Astrocyte of the cerebellum (primary cell): ENCODE measurements at regions of chr9 and their contacts with region 1.

Region 1: DNA sequence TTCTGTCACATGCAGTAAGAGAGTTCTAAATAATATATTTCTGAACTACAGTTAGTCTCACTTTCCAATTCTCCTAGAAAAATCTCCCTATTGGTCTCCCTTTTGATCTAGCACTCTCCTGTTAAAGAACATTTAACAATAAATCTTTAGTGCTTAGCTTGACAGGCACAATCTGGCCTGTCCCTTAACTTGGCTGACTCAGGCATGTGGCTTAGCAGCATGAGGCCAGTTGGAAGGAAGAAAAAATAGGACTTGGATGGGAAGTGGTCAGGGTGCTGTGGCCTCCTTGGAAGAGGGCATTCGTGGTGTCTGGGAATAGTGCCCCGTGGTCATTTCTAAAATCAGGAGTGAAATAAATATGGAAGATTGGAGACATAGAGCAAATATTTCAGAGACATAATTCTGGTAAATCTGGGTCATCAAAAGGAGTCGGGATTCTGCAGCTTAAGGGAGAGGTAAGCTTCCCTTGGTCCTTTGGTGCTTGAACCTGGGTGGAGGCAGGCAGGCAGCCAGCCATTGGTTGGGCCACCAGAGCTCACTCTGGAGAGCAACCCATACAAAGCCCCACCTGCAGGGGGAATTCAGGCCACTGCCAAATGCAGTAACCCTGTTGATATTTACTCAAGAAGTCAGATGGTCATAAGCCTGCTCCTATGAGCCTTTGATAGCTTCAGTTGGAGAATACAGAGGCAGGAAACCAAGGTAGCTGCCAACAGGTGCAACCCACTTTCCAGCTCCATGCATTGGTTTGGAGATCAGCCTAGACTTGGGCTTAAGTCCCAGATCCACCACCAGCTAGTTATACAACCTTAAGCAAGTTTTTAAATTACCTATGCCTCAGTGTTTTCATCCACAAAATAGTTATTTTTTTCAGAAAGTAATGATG is 28.8 kb upstream of the TLE4 start:
- DNase-seq: peak; percentile 13
- H3K4me3 ChIP-seq: no peak overlapping the region
- CTCF ChIP-seq: no peak

Region 2: GRCh38 chr9:79287708-79288290 is 255.2 kb before region 1 on chr9:
- in situ Hi-C with region 1: loop called (anchors 25 kb)
- DNase-seq: no peak
- H3K4me3 ChIP-seq: no peak overlapping the region
- CTCF ChIP-seq: no peak

Region 3: GRCh38 chr9:79507801-79508200 is 35.2 kb before region 1 on chr9:
- in situ Hi-C with region 1: loop called (anchors 5 kb)
- DNase-seq: no peak
- H3K4me3 ChIP-seq: no peak overlapping the region
- CTCF ChIP-seq: no peak

Region 4: GRCh38 chr9:79630521-79631403 is 87.8 kb after region 1 on chr9:
- in situ Hi-C with region 1: no loop called
- DNase-seq: no peak
- H3K4me3 ChIP-seq: no peak overlapping the region
- CTCF ChIP-seq: no peak

Region 5: DNA sequence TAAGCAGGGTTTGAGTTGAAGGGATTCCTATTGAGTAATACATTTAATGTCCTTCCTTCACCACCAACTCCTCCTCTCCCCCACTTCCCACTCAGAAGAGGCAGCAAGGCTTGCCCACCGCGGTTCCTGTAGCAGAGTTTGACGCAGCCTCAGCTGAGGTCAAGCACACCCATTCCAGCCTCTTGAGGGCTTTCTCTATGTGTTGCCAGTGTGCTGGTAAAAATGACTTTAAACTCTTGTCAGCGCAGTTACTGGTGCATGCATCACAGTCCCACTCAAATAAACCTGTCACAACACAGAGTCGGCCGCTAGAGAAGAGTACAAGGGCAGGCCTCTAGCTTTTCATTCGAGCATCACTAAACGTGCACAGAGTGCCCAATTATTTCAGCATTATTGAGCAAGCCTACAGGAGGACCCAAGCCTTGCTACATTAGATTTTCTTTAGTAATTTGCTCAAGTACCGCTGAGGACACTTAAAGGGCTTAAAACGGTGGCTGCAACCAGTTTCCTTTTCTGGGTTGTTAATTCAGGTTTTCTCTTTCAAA is 108.3 kb after region 1 on chr9:
- in situ Hi-C with region 1: no loop called
- DNase-seq: no peak
- H3K4me3 ChIP-seq: no peak overlapping the region
- CTCF ChIP-seq: no peak